Motor neuron (in vitro differentiated cells): ENCODE measurements at regions of chr5 and their contacts with region 1.

Region 1: DNA sequence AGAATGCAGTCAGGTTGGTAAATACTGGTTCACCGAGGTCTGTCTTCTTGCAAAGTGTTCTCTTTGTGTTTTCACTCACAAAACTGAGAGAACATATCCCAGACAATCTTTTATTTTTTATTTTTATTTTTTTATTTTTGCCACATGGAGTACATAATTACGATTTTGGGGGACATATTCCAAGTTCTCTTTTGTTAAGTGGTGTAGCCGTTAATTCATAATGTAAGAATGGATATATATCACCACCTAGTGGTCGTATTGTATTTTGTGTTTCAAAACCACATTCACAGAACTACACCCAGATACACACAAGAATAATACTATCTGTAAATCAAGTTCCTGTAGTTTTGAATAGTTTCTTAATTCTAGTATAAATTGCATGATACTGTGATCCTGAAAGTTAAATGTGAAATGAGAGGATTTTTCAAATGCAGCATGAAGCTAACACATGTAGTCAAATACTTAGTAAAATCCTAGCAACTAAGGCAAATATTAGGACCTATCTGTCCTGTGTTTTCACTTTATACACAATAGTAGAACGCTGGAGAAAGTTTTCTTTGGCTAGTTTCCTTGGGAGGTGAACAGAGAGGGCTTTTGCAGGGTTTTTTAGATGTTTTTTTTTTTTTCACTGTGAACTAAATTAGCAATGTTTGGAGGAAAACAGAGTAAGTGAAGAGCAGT is 92.7 kb downstream of the VCAN start:
- ATAC-seq: peak in 5 of 8 experiments; percentile 40 to 77 (median 62)
- H3K4me3 ChIP-seq: no peak overlapping the region
- H3K27ac ChIP-seq: no peak overlapping the region
- H3K4me1 ChIP-seq: peaks cover 0 to 11% of the 10 kb centered on the region in 2 donors

Region 2: GRCh38 chr5:82641331-82642003 is 922.7 kb before region 1 on chr5:
- in situ Hi-C with region 1: loop called in 1 of 9 experiments (anchors 25 kb)
- ATAC-seq: peak; percentile 82 to 97 (median 94)
- H3K4me3 ChIP-seq: no peak overlapping the region
- H3K27ac ChIP-seq: no peak overlapping the region
- H3K4me1 ChIP-seq: peaks cover 3 to 12% of the 10 kb centered on the region in 2 donors

Region 3: DNA sequence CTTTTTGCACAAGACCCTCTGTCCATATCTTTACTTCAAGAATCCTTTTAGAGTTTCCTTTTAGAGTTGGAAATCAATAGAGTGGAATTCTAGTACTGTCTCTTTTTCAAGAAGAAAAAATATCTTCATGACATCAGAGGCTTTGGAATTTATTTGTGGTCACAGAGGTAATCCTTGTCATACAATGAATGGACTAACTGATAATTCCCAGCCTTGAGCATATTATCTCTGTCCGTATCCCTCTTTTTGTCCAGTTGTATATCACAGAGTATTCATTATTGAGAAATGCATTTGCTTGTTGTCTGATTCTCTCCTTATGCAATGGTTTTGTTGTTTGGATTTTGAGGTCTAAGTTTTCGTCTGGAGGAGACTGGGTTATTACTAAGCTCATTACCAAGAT is 238.5 kb after region 1 on chr5:
- in situ Hi-C with region 1: no loop called
- ATAC-seq: no peak
- H3K4me3 ChIP-seq: no peak overlapping the region
- H3K27ac ChIP-seq: no peak overlapping the region
- H3K4me1 ChIP-seq: peaks cover 0 to 6% of the 10 kb centered on the region in 2 donors